Heart right ventricle (tissue), 16 donors: ENCODE measurements at regions of chr3 and their contacts with region 1.

Region 1: DNA sequence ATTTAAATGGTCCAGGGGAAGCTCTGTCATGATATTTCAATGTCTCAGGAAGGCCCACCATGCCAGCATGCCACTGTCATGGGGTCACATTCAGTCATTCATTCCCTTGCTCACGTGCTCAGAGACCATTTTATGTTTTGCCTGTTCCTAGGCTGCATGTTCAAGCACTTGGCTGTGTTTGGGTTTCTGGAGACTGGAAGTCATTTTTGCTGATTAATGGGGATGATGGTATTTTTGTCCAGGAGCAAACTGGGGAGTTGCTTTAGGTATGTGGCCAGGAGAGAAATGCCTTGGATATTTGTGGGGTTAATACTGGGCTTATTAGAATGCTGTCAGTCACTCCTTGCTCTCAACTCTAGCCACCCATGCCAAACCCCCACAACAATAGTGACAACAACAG is 303.5 kb downstream of the PTPRG start:
- DNase-seq: no peak
- ATAC-seq: no peak
- H3K4me3 ChIP-seq: no peak overlapping the region
- H3K27ac ChIP-seq: no peak overlapping the region
- H3K4me1 ChIP-seq: peaks cover 11 to 67% (median 38%) of the 10 kb centered on the region in 9 donors
- H3K27me3 ChIP-seq: no peaks in the 10 kb centered on the region
- CTCF ChIP-seq: no peak

Region 2: GRCh38 chr3:61821823-61822251 is 43.0 kb before region 1 on chr3:
- intact Hi-C with region 1: no loop called
- DNase-seq: no peak
- ATAC-seq: peak in 6 of 8 donors; percentile 20 to 52 (median 26)
- H3K4me3 ChIP-seq: no peak overlapping the region
- H3K27ac ChIP-seq: peak overlapping the region in 8 of 10 donors; percentile 17 to 64 (median 43)
- H3K4me1 ChIP-seq: peaks cover 0 to 57% (median 24%) of the 10 kb centered on the region in 9 donors
- H3K27me3 ChIP-seq: no peaks in the 10 kb centered on the region
- CTCF ChIP-seq: no peak

Region 3: GRCh38 chr3:61912158-61912557 is 47.3 kb after region 1 on chr3:
- intact Hi-C with region 1: loop called in 1 of 10 experiments (anchors 10 kb)
- DNase-seq: no peak
- ATAC-seq: no peak
- H3K4me3 ChIP-seq: no peak overlapping the region
- H3K27ac ChIP-seq: no peak overlapping the region
- H3K4me1 ChIP-seq: peaks cover 0 to 77% (median 16%) of the 10 kb centered on the region in 9 donors
- H3K27me3 ChIP-seq: no peaks in the 10 kb centered on the region
- CTCF ChIP-seq: no peak

Region 4: GRCh38 chr3:61927332-61927731 is 62.4 kb after region 1 on chr3:
- intact Hi-C with region 1: loop called in 3 of 10 experiments (anchors 5 to 10 kb)
- DNase-seq: peak; percentile 74 to 91
- ATAC-seq: peak; percentile 89 to 95 (median 91)
- H3K4me3 ChIP-seq: peak overlapping the region in 4 of 10 donors; percentile 0 to 28 (median 8)
- H3K27ac ChIP-seq: peak overlapping the region; percentile 51 to 81 (median 74)
- H3K4me1 ChIP-seq: peaks cover 22 to 73% (median 53%) of the 10 kb centered on the region in 9 donors
- H3K27me3 ChIP-seq: no peaks in the 10 kb centered on the region
- CTCF ChIP-seq: no peak

Region 5: DNA sequence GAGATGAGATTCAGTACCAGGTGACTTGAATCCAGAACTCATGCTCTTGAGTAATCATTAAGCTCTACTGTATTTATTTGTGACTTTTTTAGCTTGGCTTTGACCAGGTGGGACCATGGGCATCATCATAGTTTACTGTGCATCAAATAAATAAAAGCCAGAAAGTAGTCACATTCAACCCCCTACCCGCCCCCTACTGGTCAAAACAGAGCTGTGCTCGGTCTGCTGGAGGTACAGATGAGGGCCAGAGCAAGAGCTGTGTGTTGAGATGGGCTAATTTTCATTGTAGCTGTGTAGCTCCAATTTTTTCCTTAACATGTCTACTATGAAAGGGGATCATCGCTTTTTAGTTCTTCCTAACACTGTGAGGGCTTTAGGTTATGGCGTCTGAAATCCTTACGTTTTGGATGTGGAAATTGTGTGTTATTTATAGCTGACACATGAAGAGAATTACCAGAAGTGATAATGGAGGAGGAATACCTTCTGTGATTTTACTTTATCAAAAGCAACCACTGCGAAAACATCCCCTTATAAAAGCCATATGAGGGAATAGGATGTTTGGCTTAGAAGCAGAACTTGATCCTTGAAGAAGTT is 71.6 kb after region 1 on chr3:
- intact Hi-C with region 1: loop called in 2 of 10 experiments (anchors 5 to 10 kb)
- DNase-seq: no peak
- ATAC-seq: peak in 2 of 8 donors; percentile 24 to 38
- H3K4me3 ChIP-seq: no peak overlapping the region
- H3K27ac ChIP-seq: no peak overlapping the region
- H3K4me1 ChIP-seq: peaks cover 0 to 31% (median 4%) of the 10 kb centered on the region in 9 donors
- H3K27me3 ChIP-seq: no peaks in the 10 kb centered on the region
- CTCF ChIP-seq: peak; percentile 5 to 54 (median 42)

Region 6: GRCh38 chr3:62007036-62007818 is 142.3 kb after region 1 on chr3:
- intact Hi-C with region 1: no loop called
- DNase-seq: no peak
- ATAC-seq: no peak
- H3K4me3 ChIP-seq: no peak overlapping the region
- H3K27ac ChIP-seq: no peak overlapping the region
- H3K4me1 ChIP-seq: peaks cover 0 to 16% (median 0%) of the 10 kb centered on the region in 9 donors
- H3K27me3 ChIP-seq: no peaks in the 10 kb centered on the region
- CTCF ChIP-seq: no peak

Region 7: DNA sequence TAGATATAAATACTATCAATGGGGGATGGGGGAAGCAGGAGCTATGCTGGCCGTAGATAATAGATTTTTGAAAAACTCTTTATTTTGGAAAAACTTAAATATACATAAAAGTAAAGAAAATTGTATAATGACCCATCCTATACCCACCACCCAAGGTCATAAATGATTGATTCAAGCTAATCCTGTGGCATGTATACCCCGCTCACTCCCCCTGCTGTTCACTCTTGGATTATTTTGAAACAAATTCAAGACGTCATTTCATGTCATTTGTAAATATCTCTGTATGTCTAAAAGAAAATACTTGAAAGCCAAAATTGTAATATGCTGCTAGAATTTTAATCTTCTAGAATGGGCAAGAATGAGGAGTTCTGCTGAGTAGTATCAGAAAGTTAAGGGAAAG is 266.7 kb after region 1 on chr3:
- intact Hi-C with region 1: loop called in 2 of 10 experiments (anchors 5 kb)
- DNase-seq: no peak
- ATAC-seq: no peak
- H3K4me3 ChIP-seq: no peak overlapping the region
- H3K27ac ChIP-seq: no peak overlapping the region
- H3K4me1 ChIP-seq: peaks cover 10 to 46% (median 33%) of the 10 kb centered on the region in 9 donors
- H3K27me3 ChIP-seq: no peaks in the 10 kb centered on the region
- CTCF ChIP-seq: peak in 7 of 9 donors; percentile 20 to 63 (median 49)